ENCODE measurements at regions of chr17 and their contacts with region 1.

Region 1: GRCh38 chr17:41002814-41003213 is 3.1 kb upstream of the KRTAP3-2 start:
- DNase-seq: peak; percentile 79
- ATAC-seq: peak; percentile 64
- H3K4me3 ChIP-seq: no peak overlapping the region
- H3K27ac ChIP-seq: peak overlapping the region; percentile 52
- H3K4me1 ChIP-seq: peaks cover 52% of the 10 kb centered on the region
- H3K27me3 ChIP-seq: no peaks in the 10 kb centered on the region
- CTCF ChIP-seq: no peak
- EP300 ChIP-seq: peak in 1 of 2 experiments; percentile 51; a peak in 1 of 4 replicates
- POLR2A ChIP-seq: no peak
- RAD21 ChIP-seq: no peak

Region 2: DNA sequence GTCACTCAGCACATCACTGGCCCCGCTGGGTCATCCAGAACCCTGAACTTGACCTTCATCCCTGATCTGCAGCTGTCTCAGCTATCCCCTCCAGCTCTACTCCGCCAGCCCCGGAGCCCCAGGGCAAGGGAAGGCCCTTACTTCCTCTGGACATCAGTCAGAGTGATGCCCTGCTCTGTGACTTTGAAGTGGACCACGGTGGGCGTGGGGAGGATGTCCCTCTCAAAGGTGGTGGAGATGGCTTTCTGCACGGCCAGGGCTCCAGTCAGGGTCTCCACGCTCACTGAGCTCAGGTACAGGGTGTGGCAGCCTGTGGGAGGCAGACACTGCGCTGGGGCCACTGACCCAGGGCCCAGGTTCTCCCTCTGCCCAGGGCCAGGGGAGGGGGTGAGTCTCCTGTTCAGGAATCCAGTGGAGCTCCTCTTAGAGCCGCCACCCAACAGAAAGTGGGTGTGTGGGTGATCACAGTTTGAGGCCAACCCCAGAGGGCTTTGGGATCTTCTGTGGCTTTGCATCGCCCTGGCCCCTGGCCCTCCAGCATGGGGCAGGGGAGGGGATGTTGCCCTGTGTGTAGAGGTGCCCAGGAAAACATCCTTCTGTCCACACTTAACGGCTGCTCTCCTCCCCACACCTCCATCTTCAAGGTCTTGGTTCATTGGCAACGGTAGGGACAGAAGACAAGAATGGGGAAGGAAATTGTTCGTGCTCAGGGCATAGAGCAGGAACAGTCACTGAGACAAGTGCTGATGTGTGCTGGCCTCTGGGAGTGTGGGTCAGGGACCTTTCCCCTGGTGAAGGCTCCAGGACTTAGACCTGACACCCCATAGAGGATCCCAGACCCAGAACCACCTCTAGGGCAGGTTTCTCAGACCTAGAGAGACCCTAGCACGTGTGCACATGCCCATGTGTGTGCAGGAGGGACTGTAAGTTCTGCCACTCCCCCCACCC is 523.0 kb before region 1 on chr17:
- CTCF ChIA-PET with region 1: no interaction called
- POLR2A ChIA-PET with region 1: no interaction called
- in situ Hi-C with region 1: no loop called
- intact Hi-C with region 1: no loop called
- DNase-seq: no peak
- ATAC-seq: no peak; the same call in 2 of the 3 replicates
- H3K4me3 ChIP-seq: no peak overlapping the region
- H3K27ac ChIP-seq: no peak overlapping the region
- H3K4me1 ChIP-seq: peaks cover 51% of the 10 kb centered on the region
- H3K27me3 ChIP-seq: no peaks in the 10 kb centered on the region
- CTCF ChIP-seq: no peak
- EP300 ChIP-seq: no peak
- POLR2A ChIP-seq: no peak
- RAD21 ChIP-seq: no peak

Region 3: GRCh38 chr17:40937384-40937819 is 65.4 kb before region 1 on chr17 and contains the start of gene KRT23:
- CTCF ChIA-PET with region 1: no interaction called
- POLR2A ChIA-PET with region 1: no interaction called
- in situ Hi-C with region 1: no loop called
- intact Hi-C with region 1: no loop called
- DNase-seq: no peak
- ATAC-seq: peak; percentile 73
- H3K4me3 ChIP-seq: peak within 1 kb of the TSS; percentile 32 to 65 (median 62)
- H3K27ac ChIP-seq: peak within 1 kb of the TSS; percentile 48
- H3K4me1 ChIP-seq: peaks cover 62% of the 10 kb centered on the region
- H3K27me3 ChIP-seq: no peaks in the 10 kb centered on the region
- CTCF ChIP-seq: no peak
- EP300 ChIP-seq: no peak
- POLR2A ChIP-seq: no peak
- RAD21 ChIP-seq: no peak
- total RNA-seq, gene KRT23: 24.7 and 32.9 TPM in 2 replicates

Region 4: DNA sequence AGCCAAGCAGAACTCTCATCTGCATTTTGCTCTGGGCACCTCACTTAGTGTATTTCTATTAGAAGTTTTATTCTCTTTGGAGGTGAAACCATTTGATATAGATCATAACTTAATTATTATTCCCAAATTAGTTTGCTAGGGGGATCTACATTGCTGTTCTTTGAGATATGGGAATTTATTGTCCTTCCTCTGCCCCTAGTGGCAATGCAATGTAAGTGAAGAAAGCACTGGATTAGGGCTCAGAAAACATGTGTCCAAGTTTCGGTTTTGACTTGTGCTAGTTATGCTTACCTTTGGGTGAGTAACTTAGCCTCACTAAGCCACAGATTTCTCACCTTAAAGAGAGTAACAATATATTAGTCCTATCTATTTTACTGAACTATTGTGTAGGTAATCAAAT is 39.0 kb before region 1 on chr17:
- CTCF ChIA-PET with region 1: no interaction called
- POLR2A ChIA-PET with region 1: no interaction called
- in situ Hi-C with region 1: loop called (anchors 5 kb)
- intact Hi-C with region 1: no loop called
- DNase-seq: no peak
- ATAC-seq: peak; percentile 38; the same call in 1 of the 3 replicates
- H3K4me3 ChIP-seq: no peak overlapping the region
- H3K27ac ChIP-seq: no peak overlapping the region
- H3K4me1 ChIP-seq: peaks cover 29% of the 10 kb centered on the region
- H3K27me3 ChIP-seq: no peaks in the 10 kb centered on the region
- CTCF ChIP-seq: peak; percentile 56
- EP300 ChIP-seq: no peak
- POLR2A ChIP-seq: no peak
- RAD21 ChIP-seq: no peak

Measured in HepG2 (cell line).